Heart right ventricle (tissue), 16 donors: ENCODE measurements at regions of chr1 and their contacts with region 1.

Region 1: GRCh38 chr1:76269155-76269554 is 194.6 kb downstream of the ST6GALNAC3 start:
- DNase-seq: no peak
- ATAC-seq: peak in 6 of 8 donors; percentile 41 to 85 (median 62)
- H3K4me3 ChIP-seq: no peak overlapping the region
- H3K27ac ChIP-seq: peak overlapping the region in 2 of 10 donors; percentile 31 to 57
- H3K4me1 ChIP-seq: peaks cover 0 to 44% (median 17%) of the 10 kb centered on the region in 9 donors
- H3K27me3 ChIP-seq: no peaks in the 10 kb centered on the region
- CTCF ChIP-seq: no peak

Region 2: DNA sequence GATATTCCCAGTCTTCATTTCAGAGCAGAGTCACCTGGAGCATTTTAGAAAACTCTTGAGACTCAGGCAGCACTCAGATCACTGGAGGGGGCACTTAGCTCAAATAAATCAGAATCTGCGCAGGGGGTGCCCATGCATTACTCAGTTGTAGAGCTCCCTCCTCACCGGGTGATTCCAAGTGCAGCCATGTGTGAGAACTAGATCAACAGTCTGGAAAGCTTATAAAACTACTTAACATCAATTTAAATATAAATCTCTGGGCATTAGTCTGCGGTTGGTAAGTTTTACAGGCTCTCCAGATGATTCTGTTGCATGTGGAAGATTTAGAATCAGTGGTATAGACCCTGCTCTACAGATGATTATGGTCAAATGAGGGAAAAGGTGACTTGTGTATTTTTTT is 66.0 kb before region 1 on chr1:
- intact Hi-C with region 1: loop called in 1 of 10 experiments (anchors 10 kb)
- DNase-seq: no peak
- ATAC-seq: no peak
- H3K4me3 ChIP-seq: no peak overlapping the region
- H3K27ac ChIP-seq: no peak overlapping the region
- H3K4me1 ChIP-seq: peaks cover 0 to 11% (median 0%) of the 10 kb centered on the region in 9 donors
- H3K27me3 ChIP-seq: no peaks in the 10 kb centered on the region
- CTCF ChIP-seq: no peak

Region 3: DNA sequence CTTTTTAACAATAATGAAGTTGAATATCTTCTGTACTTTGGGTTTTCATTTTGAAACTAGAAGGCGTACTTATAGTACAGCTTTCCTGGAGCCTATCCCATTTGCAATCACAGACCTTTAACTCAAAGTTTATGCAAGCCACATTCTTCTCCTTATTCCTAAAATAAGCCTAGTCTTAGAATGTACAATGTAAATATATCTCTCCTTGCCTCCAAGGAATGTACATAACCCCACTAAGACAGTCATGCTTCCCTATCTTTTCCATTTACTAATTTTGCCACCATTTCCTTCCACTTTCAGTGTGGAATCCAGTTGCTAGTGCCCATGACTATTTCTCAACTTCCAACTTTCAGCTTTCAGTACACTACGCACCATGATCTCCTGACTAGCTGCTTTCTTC is 133.0 kb after region 1 on chr1:
- intact Hi-C with region 1: no loop called
- DNase-seq: no peak
- ATAC-seq: no peak
- H3K4me3 ChIP-seq: no peak overlapping the region
- H3K27ac ChIP-seq: no peak overlapping the region
- H3K4me1 ChIP-seq: no peaks in the 10 kb centered on the region
- H3K27me3 ChIP-seq: no peaks in the 10 kb centered on the region
- CTCF ChIP-seq: no peak